Sciatic nerve (tissue), 2 donors: ENCODE measurements at regions of chr3 and their contacts with region 1.

Region 1: GRCh38 chr3:184099806-184100686 is 3.2 kb downstream of the HTR3E start:
- DNase-seq: no peak
- ATAC-seq: no peak

Region 2: DNA sequence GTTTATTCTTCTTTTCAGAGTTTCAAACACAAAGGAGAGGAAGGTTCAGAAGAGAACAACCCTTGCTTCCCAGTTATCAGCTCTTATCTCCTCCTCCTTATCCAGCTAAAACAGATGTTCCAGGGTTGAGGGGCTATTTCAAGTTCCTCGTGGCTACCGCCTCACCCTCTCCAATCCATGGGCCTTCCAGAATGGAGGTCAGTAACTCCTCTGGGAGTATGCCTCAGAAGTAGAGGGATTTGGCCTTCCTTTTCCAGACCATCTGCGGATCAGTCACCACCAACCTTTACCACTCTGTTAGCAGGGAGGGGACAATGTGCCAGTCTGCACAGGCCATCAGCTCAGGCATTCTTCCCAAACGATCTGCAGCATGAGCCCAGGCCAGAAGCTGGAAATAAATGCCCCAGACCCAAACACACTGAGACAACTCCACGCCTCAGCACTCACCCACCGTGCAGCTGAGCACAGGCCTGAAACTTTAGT is 32.4 kb before region 1 on chr3:
- intact Hi-C with region 1: loop called (anchors 1 kb)
- DNase-seq: no peak
- ATAC-seq: no peak